ENCODE measurements at regions of chr2 and their contacts with region 1.

Region 1: DNA sequence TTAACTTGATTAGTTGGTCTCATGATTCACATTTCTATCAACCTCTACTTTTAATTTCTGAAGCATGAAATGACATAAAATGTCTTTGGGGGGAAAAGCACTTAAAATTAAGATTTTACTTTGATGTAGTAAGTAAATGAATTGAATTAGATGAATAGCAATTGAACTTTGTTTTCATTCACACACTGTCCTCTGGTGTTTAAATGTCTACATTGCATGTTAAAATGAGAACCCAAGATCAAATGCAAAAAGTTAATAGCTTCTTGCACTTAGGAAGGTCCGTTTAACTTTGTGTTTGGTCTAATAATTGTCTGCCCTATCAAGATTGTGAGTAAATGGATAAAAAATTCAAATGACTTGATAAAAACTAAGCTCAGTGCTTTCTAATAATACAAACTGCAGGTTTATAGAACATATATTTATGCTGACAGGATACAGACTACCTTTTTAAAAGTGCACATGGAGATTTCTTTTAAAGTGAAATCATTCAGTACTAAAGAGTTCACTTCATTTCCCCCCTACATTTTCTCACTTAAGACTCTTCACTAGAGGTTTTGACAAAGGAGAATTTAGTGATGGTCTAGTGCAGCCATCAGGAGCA is 156.2 kb upstream of the NABP1 start:
- DNase-seq: peak in 1 of 2 experiments; percentile 15
- H3K4me3 ChIP-seq: no peak overlapping the region
- H3K4me3 Mint-ChIP-seq: no peak overlapping the region
- H3K27ac Mint-ChIP-seq: no peak overlapping the region
- H3K4me1 ChIP-seq: no peaks in the 10 kb centered on the region
- H3K4me1 Mint-ChIP-seq: peaks cover 13% of the 10 kb centered on the region
- H3K27me3 ChIP-seq: no peaks in the 10 kb centered on the region
- H3K27me3 Mint-ChIP-seq: no peaks in the 10 kb centered on the region
- CTCF ChIP-seq: peak; percentile 62 to 74

Region 2: GRCh38 chr2:191051825-191052778 is 469.6 kb before region 1 on chr2:
- CTCF ChIA-PET with region 1: interaction called, 3 read pairs
- POLR2A ChIA-PET with region 1: no interaction called
- intact Hi-C with region 1: loop called (anchors 1 kb)
- DNase-seq: peak in 1 of 2 experiments; percentile 44
- H3K4me3 ChIP-seq: no peak overlapping the region
- H3K4me3 Mint-ChIP-seq: no peak overlapping the region
- H3K27ac Mint-ChIP-seq: no peak overlapping the region
- H3K4me1 ChIP-seq: peaks cover 14% of the 10 kb centered on the region
- H3K4me1 Mint-ChIP-seq: no peaks in the 10 kb centered on the region
- H3K27me3 ChIP-seq: no peaks in the 10 kb centered on the region
- H3K27me3 Mint-ChIP-seq: peaks cover 6% of the 10 kb centered on the region
- CTCF ChIP-seq: peak; percentile 61

Region 3: GRCh38 chr2:191218292-191218898 is 303.3 kb before region 1 on chr2:
- CTCF ChIA-PET with region 1: no interaction called
- POLR2A ChIA-PET with region 1: no interaction called
- intact Hi-C with region 1: loop called (anchors 1 kb)
- DNase-seq: peak; percentile 63 to 65
- H3K4me3 ChIP-seq: no peak overlapping the region
- H3K4me3 Mint-ChIP-seq: no peak overlapping the region
- H3K27ac Mint-ChIP-seq: no peak overlapping the region
- H3K4me1 ChIP-seq: peaks cover 27% of the 10 kb centered on the region
- H3K4me1 Mint-ChIP-seq: peaks cover 15% of the 10 kb centered on the region
- H3K27me3 ChIP-seq: no peaks in the 10 kb centered on the region
- H3K27me3 Mint-ChIP-seq: no peaks in the 10 kb centered on the region
- CTCF ChIP-seq: peak; percentile 55 to 61

Region 4: DNA sequence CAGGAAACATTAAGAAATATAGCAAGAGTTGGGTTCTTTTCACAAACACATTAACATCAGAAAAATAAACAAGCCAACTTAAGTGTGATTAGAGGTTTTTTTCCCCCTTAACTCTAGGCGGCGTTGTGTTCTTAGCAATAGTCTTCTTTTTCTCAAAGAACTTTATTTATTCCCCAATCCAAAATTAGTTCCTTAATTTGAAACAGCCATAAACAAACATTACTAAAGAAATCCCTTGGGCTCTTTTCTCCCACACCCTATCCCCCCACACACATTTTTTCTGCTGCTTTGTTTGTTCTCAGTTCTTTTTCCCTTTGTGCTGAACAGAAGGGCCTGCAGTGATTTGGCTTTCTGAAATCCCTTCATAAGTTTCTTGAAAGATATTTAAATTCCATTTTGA is 289.7 kb before region 1 on chr2:
- CTCF ChIA-PET with region 1: no interaction called
- POLR2A ChIA-PET with region 1: no interaction called
- intact Hi-C with region 1: loop called (anchors 1 kb)
- DNase-seq: no peak
- H3K4me3 ChIP-seq: no peak overlapping the region
- H3K4me3 Mint-ChIP-seq: no peak overlapping the region
- H3K27ac Mint-ChIP-seq: no peak overlapping the region
- H3K4me1 ChIP-seq: no peaks in the 10 kb centered on the region
- H3K4me1 Mint-ChIP-seq: no peaks in the 10 kb centered on the region
- H3K27me3 ChIP-seq: no peaks in the 10 kb centered on the region
- H3K27me3 Mint-ChIP-seq: no peaks in the 10 kb centered on the region
- CTCF ChIP-seq: peak; percentile 28 to 39

Region 5: GRCh38 chr2:191333911-191334357 is 187.8 kb before region 1 on chr2:
- CTCF ChIA-PET with region 1: no interaction called
- POLR2A ChIA-PET with region 1: no interaction called
- intact Hi-C with region 1: no loop called
- DNase-seq: no peak
- H3K4me3 ChIP-seq: no peak overlapping the region
- H3K4me3 Mint-ChIP-seq: no peak overlapping the region
- H3K27ac Mint-ChIP-seq: no peak overlapping the region
- H3K4me1 ChIP-seq: no peaks in the 10 kb centered on the region
- H3K4me1 Mint-ChIP-seq: peaks cover under 1% of the 10 kb centered on the region
- H3K27me3 ChIP-seq: no peaks in the 10 kb centered on the region
- H3K27me3 Mint-ChIP-seq: no peaks in the 10 kb centered on the region
- CTCF ChIP-seq: no peak

Region 6: DNA sequence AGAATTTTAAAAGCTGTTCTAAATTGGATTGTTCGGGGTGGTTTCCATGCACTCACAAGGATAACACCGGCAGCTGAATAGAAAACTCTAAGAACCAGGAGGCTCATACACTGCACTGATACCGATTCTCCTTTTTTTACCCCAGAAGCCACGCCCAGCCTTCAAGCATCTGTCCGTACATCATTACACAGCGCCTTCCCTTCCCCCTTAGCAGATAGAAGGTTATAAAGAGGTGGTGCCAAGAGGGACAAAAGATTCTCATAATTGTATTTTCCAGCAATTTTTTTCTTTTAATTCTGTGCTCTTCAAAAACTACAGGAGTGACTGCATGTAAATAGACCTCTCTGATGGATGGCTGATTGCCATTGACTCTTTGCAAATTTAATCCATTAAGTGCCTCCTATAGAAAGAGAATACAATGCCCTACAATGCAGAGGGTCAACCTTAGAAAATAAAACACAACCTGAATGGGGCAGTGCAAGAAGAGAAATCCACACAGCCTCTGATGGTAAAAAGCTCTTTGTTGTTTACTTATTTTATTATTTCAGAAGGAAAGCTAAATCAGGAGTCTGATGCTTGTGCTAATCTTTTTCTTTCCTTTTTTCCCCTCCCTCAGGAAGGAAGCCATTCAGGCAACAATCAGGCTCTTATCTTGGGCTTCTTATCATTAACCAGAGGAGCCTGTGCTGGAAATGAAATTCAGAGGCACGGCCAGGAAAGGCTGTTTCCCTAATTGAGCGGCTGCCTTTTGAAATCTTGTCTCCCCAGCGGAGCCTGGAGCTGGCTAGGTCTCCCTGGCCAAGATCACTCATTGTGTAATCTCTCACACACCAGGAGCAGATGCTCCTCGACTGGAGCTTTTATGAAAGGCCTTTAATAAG is 42.7 kb before region 1 on chr2:
- CTCF ChIA-PET with region 1: no interaction called
- POLR2A ChIA-PET with region 1: no interaction called
- intact Hi-C with region 1: no loop called
- DNase-seq: peak; percentile 71 to 87
- H3K4me3 ChIP-seq: no peak overlapping the region
- H3K4me3 Mint-ChIP-seq: no peak overlapping the region
- H3K27ac Mint-ChIP-seq: no peak overlapping the region
- H3K4me1 ChIP-seq: peaks cover 24% of the 10 kb centered on the region
- H3K4me1 Mint-ChIP-seq: peaks cover 23% of the 10 kb centered on the region
- H3K27me3 ChIP-seq: no peaks in the 10 kb centered on the region
- H3K27me3 Mint-ChIP-seq: no peaks in the 10 kb centered on the region
- CTCF ChIP-seq: no peak

Measured in Caco-2 (cell line).